Activated CD8-positive, alpha-beta T cell treated with anti-CD3 and anti-CD28 coated beads, Interleukin-2, amount 10 ng/mL, durations not matched to agents 7 days and 5 days (primary cell): ENCODE measurements at regions of chr13 and their contacts with region 1.

Region 1: DNA sequence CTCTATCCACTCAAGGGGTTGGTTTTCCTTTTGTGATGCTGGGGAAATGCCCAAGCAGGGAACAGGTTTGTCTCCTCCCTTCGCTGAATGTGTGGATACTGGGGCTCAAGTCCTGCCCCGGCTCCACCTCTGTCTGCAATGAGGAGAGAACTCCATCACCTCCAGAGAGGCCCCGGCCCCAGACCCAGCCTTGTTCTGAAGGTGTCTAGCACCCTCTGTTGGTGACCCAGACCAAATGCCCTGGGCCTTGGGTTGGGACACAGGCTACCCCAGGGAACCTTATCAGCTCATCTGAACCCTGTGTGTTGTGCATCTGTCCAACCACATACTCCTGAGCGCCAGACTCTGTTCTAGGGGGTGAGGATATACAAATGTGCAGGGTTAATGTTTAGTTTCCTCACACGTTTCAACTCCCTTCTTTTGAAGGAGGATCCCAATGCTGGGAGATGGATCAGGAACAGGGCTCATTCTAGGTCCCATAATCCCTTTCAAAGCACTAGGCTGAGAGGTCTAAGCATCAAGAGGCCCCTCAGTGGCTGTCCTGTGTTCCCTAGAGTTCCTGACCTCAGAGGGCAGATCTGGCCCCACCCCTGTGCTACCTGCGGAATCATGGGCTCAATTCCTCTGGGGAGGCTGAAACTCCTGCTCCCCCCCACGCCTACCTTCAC is 112.5 kb upstream of the SLC7A1 start:
- DNase-seq: peak; percentile 46
- ATAC-seq: peak; percentile 78
- H3K4me3 Mint-ChIP-seq: no peak overlapping the region
- H3K27ac Mint-ChIP-seq: no peak overlapping the region
- H3K4me1 Mint-ChIP-seq: no peaks in the 10 kb centered on the region
- H3K27me3 Mint-ChIP-seq: peaks cover 17% of the 10 kb centered on the region

Region 2: DNA sequence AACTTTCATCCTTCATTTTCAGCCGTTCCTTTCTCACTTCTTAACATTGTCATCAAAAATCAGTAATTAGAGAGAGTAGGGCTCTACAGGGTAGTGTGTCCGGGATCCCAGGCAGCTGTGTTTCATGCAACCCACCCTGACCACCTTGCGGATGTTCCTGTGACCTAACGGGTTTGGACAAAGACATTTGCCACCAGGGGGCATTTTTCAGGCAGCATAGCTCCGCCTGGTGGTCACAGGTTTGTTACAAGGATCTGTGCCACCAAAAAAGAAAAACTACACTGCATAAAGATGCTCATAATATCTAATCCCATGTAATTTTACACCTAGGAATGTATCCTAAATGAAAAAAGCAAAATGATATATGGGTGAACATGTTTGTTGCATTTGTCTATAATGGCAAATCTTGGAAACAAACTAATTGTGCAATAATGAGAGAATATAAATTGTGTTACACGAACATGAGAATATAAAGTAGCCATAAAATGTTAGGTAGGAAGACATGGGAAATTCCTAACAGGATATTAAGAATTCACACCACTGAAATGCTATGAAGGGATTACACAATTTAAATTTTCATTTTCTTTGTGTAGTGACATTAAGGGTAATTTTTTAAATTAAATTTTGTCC is 235.6 kb before region 1 on chr13:
- CTCF ChIA-PET with region 1: interaction called, 10 read pairs
- POLR2A ChIA-PET with region 1: no interaction called
- DNase-seq: peak; percentile 69
- ATAC-seq: peak; percentile 63
- H3K4me3 Mint-ChIP-seq: no peak overlapping the region
- H3K27ac Mint-ChIP-seq: no peak overlapping the region
- H3K4me1 Mint-ChIP-seq: peaks cover 2% of the 10 kb centered on the region
- H3K27me3 Mint-ChIP-seq: peaks cover 6% of the 10 kb centered on the region